ENCODE measurements at regions of chr1 and their contacts with region 1.

Region 1: GRCh38 chr1:1033009-1033587 is 13.2 kb downstream of the AGRN start:
- DNase-seq: peak; percentile 75 to 87 (median 84)
- ATAC-seq: peak; percentile 55 to 89 (median 80)
- H3K4me3 ChIP-seq: peak overlapping the region; percentile 7 to 61 (median 50)
- H3K27ac ChIP-seq: no peak overlapping the region
- H3K4me1 ChIP-seq: peaks cover 3 to 26% (median 14%) of the 10 kb centered on the region in 12 donors
- H3K27me3 ChIP-seq: peaks cover 0 to 47% (median 0%) of the 10 kb centered on the region in 9 donors
- CTCF ChIP-seq: peak; percentile 62 to 79 (median 66)
- POLR2A ChIP-seq: peak in 1 of 2 donors; percentile 6

Region 2: GRCh38 chr1:1291548-1292441 is 258.7 kb after region 1 on chr1:
- intact Hi-C with region 1: loop called in 3 of 10 experiments (anchors 2 to 10 kb)
- DNase-seq: peak in 4 of 5 donors; percentile 65 to 81 (median 73)
- ATAC-seq: peak; percentile 65 to 82 (median 66)
- H3K4me3 ChIP-seq: no peak overlapping the region
- H3K27ac ChIP-seq: no peak overlapping the region
- H3K4me1 ChIP-seq: peaks cover 0 to 15% (median 7%) of the 10 kb centered on the region in 12 donors
- H3K27me3 ChIP-seq: peaks cover 0 to 4% (median 0%) of the 10 kb centered on the region in 9 donors
- CTCF ChIP-seq: peak; percentile 47 to 69 (median 62)
- POLR2A ChIP-seq: no peak

Region 3: GRCh38 chr1:1360506-1361169 is 327.5 kb after region 1 on chr1:
- intact Hi-C with region 1: loop called in 1 of 10 experiments (anchors 10 kb)
- DNase-seq: peak; percentile 72 to 87 (median 80)
- ATAC-seq: peak; percentile 30 to 69 (median 60)
- H3K4me3 ChIP-seq: no peak overlapping the region
- H3K27ac ChIP-seq: peak overlapping the region; percentile 53 to 91 (median 82)
- H3K4me1 ChIP-seq: peaks cover 0 to 33% (median 7%) of the 10 kb centered on the region in 12 donors
- H3K27me3 ChIP-seq: peaks cover 0 to 26% (median 4%) of the 10 kb centered on the region in 9 donors
- CTCF ChIP-seq: no peak
- POLR2A ChIP-seq: peak in 1 of 2 donors; percentile 11

Measured in heart left ventricle (tissue), 16 donors.